ENCODE measurements at regions of chr2 and their contacts with region 1.

Region 1: DNA sequence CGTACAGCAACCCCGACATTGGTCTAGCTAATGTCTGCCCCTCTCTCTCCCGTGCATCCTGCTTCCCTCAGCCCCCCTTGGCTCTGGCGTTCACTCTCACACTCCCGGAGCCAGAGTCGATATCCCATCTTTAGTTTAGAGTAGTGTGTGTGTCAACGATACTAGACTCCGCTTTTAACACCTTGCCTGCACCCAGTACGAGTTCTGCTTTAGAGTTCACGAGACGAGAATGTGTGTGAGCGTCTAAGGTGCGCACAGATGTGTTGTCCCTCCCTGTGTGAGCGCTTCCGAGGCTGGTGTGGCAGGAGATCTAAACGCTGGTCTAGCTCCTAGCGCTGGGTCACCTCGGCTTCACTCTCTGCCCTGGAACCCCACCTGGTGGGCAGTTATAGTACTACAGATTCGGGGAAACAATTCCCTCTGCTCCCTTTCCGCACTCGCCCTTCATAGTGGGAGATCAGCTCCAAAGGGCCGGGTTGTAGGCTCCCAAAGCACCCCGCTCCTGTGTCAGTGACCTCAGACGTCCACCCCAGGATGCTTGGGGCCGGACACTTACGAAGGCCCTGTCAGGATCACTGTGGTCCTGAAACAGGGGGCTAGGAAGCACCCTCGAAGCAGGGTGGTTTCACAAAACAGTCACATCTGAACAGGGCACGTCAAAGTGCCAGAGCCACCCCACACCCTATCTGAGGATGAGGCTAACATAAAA is 2.6 kb upstream of the CYP26B1 start:
- DNase-seq: peak; percentile 85
- ATAC-seq: peak; percentile 56
- H3K4me3 Mint-ChIP-seq: peak overlapping the region; percentile 79
- H3K27ac Mint-ChIP-seq: no peak overlapping the region
- H3K4me1 Mint-ChIP-seq: peaks cover 31% of the 10 kb centered on the region
- H3K27me3 Mint-ChIP-seq: peaks cover 78% of the 10 kb centered on the region
- CTCF ChIP-seq: peak; percentile 83

Region 2: GRCh38 chr2:72104821-72105588 is 45.3 kb before region 1 on chr2:
- CTCF ChIA-PET with region 1: interaction called, 11 read pairs
- POLR2A ChIA-PET with region 1: no interaction called
- DNase-seq: peak; percentile 53
- ATAC-seq: peak; percentile 88
- H3K4me3 Mint-ChIP-seq: no peak overlapping the region
- H3K27ac Mint-ChIP-seq: no peak overlapping the region
- H3K4me1 Mint-ChIP-seq: 0 out of 2 replicates have a peak, but pooled peaks cover 2% of the 10 kb centered on the region
- H3K27me3 Mint-ChIP-seq: peaks cover 3% of the 10 kb centered on the region; the same call in 1 of the 2 replicates
- CTCF ChIP-seq: no peak

Region 3: DNA sequence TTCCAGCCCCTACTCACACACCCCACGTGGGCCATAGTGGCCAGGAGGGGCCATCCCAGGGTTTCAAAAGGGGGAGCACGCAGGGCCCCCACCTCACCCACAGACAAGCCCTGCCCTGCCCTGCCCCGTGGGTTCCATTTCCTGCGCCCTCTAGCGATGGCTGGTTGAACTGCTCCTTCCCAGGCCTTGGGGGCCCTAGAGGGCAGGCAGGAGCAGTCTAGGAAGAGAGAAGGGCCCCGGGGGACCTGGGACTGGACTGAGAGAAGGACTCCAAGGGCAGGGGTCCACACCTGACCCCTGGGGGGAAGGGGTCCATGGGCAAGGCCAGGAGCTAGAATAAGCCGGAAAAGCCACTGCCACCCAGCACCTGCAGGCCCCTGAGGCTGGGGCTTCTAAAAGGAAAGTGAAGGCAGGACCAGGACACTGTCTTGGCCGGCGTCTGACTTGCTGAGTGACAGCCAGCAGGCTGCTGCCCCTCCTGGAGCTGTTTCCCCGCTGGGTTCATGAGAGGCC is 12.8 kb before region 1 on chr2:
- CTCF ChIA-PET with region 1: interaction called, 19 read pairs
- POLR2A ChIA-PET with region 1: no interaction called
- DNase-seq: peak; percentile 91
- ATAC-seq: peak; percentile 89
- H3K4me3 Mint-ChIP-seq: no peak overlapping the region
- H3K27ac Mint-ChIP-seq: no peak overlapping the region
- H3K4me1 Mint-ChIP-seq: peaks cover 8% of the 10 kb centered on the region
- H3K27me3 Mint-ChIP-seq: peaks cover 39% of the 10 kb centered on the region
- CTCF ChIP-seq: peak; percentile 97

Region 4: DNA sequence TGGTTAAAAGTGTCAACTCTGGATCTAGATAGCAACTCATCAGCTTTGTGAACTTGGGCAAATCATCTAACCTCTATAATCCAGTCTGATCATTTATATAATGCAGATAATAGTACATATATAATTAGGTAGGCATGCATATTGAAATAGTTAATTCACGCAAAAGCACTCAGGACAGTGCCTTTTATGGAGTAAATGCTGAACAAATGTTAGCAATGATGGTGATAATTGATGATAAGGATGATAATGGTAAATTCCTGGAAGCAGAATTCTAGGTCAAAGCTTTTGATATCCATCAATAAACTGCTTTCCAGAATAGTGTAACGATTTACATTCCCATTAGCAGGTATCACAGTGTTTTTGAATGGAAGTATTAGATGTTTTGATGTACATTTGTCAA is 57.0 kb after region 1 on chr2:
- CTCF ChIA-PET with region 1: no interaction called
- POLR2A ChIA-PET with region 1: no interaction called
- DNase-seq: no peak
- ATAC-seq: no peak
- H3K4me3 Mint-ChIP-seq: no peak overlapping the region
- H3K27ac Mint-ChIP-seq: no peak overlapping the region
- H3K4me1 Mint-ChIP-seq: peaks cover 9% of the 10 kb centered on the region
- H3K27me3 Mint-ChIP-seq: no peaks in the 10 kb centered on the region
- CTCF ChIP-seq: no peak

Region 5: DNA sequence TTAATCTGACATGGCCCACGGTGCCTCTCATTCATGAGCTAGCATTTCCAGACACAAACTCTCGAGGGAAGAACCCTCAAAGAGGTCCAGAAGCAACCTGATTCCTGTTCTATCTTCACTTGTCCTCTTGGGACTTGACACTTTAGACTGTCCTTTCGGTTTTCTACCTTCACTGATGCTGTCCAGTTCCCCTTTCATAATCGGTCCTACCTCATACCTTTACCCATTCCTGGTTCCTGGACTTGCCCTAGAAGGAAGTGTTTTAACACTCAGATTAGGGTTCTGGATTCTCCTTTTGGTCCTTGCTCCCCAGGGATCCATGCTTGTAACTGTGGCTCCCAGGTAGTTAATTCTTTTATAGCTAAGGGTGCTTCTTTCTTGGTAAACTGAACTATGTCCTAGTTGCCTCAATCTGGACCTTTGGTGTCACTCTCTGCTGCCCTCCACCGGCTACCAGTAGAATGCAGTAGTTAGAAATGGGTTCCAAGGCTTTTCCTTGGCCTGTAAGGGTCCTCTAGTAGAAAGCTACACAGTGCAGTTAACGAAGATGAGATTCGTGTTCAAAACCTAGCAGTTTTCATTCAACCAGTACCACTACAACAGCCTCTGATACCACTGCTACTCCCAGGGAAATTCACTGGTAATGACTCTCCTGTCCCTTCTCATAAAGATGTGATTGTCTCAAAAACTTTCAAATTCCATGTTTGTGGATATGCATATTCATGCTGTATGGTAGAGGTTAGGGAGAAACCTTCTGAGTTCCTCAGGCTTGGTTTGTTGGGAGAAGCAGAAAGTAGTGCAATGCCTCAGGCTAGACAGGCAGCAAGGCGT is 175.5 kb after region 1 on chr2:
- CTCF ChIA-PET with region 1: interaction called, 12 read pairs
- POLR2A ChIA-PET with region 1: no interaction called
- DNase-seq: peak; percentile 72
- ATAC-seq: peak; percentile 94
- H3K4me3 Mint-ChIP-seq: no peak overlapping the region
- H3K27ac Mint-ChIP-seq: no peak overlapping the region
- H3K4me1 Mint-ChIP-seq: peaks cover 10% of the 10 kb centered on the region
- H3K27me3 Mint-ChIP-seq: no peaks in the 10 kb centered on the region
- CTCF ChIP-seq: peak; percentile 73

Region 6: GRCh38 chr2:72511906-72512305 is 361.6 kb after region 1 on chr2:
- CTCF ChIA-PET with region 1: no interaction called
- POLR2A ChIA-PET with region 1: no interaction called
- DNase-seq: no peak
- ATAC-seq: no peak
- H3K4me3 Mint-ChIP-seq: no peak overlapping the region
- H3K27ac Mint-ChIP-seq: no peak overlapping the region
- H3K4me1 Mint-ChIP-seq: peaks cover 4% of the 10 kb centered on the region
- H3K27me3 Mint-ChIP-seq: no peaks in the 10 kb centered on the region
- CTCF ChIP-seq: no peak

Measured in WTC11 (cell line).